HAP-1 (cell line): ENCODE measurements at regions of chr19 and their contacts with region 1.

Region 1: DNA sequence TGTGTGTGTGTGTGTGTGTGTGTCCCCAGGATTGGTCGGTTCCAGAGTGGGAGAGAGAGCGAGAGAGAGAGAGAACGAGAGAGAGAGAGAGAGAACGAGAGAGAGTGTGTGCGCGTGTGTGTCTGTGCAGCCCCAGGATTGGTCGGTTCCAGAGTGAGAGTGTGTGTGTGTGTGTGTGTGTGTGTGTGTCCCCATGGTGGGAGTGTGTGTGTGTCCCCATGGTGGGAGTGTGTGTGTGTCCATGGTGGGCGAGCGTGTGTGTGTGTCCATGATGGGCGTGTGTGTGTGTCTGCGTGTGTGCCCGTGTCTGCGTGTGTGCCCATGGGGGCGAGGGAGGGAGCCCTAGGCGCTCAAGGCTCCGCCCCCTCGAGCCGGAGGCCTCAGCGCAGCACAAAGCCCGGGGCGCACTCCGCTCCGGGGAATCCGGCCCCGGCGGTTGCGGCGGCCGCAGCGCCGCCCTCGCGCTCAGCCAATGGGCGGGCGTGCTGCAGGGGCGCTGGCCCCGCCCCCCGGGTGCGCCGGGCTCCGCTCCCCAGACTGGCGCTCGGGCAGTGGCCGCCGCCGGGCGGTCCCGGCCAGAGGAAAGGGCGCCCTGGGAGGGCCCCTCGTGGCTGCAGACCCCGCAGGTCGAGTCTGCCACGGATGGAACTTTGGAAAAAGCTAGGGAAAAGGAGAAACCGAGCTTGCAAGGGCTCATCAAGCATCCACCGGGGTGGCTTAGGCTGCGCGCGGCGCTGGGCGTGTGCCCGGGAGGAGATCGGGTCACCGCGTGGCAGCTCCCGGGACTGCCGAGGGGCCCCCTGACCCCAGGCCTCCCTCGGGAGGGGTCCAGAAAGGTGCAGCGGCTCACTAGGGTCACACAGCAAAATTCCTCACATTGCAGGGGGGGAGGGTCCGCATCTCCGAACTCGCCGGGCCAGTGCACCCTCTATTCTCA is 96.2 kb downstream of the INSR start:
- DNase-seq: peak; percentile 83 to 92
- H3K4me3 ChIP-seq: peak overlapping the region; percentile 65
- H3K4me1 ChIP-seq: peaks cover 11% of the 10 kb centered on the region
- H3K27me3 ChIP-seq: no peaks in the 10 kb centered on the region

Region 2: GRCh38 chr19:7152568-7152967 is 45.5 kb before region 1 on chr19:
- in situ Hi-C with region 1: no loop called
- DNase-seq: peak in 1 of 2 experiments; percentile 23
- H3K4me3 ChIP-seq: no peak overlapping the region
- H3K4me1 ChIP-seq: no peaks in the 10 kb centered on the region
- H3K27me3 ChIP-seq: no peaks in the 10 kb centered on the region

Region 3: DNA sequence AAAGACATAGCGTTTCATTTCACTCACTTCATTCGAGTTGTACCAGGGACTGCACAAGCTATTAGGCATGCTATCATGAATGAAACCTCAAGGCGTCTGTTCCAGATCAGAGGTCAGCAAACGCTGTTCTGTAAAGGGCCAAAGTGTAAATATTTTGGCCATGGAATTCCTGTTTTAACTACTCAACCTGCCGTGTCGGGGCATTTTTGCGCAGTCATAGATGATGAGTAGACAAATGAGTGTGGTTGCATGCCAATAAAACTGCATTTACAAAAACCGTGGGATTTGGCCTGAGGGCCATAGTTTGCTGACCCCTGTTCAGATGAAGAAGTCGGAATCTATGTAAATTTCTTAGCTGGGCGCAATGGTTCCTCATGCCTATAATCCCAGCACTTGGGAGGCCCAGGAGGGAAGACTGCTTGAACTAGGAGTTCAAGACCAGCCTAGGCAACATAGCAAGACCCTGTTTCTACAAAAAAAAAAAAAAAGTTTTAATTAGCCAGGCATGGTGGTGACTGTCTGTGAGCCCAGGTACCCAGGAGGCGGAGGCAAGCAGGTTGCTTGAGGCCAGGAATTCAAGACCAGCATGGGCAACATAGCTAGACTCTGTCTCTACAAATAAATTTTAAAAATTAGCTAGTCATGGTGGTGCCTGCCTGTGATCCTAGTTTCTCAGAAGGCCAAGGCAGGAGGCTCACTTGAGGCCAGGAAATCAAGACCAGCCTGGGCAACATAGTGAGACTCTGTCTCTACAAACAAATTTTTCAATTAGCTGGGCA is 89.9 kb after region 1 on chr19:
- in situ Hi-C with region 1: loop called (anchors 5 kb)
- DNase-seq: peak; percentile 37 to 56
- H3K4me3 ChIP-seq: no peak overlapping the region
- H3K4me1 ChIP-seq: peaks cover 7% of the 10 kb centered on the region
- H3K27me3 ChIP-seq: no peaks in the 10 kb centered on the region